PC-9 (cell line): ENCODE measurements at regions of chr5 and their contacts with region 1.

Region 1: DNA sequence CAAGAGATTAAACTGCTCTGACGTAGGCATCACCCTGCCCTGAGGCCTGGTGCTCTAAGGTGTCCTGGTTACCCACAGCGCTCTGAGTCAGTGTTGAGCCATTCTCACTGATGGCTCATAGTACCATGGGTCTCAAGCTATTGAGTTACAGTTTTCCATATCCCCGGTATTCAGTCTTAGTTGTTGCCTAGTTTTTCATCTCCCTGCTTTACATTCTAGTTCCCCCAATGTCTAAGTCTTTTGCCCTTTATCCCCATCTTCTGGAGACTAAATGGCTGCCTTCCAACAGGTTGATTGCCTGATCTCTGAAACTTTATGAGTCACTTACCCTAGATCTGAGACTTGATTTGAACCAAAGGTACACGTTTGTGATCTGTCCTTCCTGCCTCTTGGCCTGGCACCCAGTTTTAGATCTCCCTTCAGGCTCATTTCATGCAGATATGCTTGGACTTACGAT is 161.2 kb upstream of the PTGER4 start:
- DNase-seq: peak; percentile 96 to 98
- H3K4me3 ChIP-seq: no peak overlapping the region
- H3K27ac ChIP-seq: peak overlapping the region; percentile 84
- H3K4me1 ChIP-seq: peaks cover 33% of the 10 kb centered on the region
- H3K27me3 ChIP-seq: no peaks in the 10 kb centered on the region
- CTCF ChIP-seq: no peak

Region 2: DNA sequence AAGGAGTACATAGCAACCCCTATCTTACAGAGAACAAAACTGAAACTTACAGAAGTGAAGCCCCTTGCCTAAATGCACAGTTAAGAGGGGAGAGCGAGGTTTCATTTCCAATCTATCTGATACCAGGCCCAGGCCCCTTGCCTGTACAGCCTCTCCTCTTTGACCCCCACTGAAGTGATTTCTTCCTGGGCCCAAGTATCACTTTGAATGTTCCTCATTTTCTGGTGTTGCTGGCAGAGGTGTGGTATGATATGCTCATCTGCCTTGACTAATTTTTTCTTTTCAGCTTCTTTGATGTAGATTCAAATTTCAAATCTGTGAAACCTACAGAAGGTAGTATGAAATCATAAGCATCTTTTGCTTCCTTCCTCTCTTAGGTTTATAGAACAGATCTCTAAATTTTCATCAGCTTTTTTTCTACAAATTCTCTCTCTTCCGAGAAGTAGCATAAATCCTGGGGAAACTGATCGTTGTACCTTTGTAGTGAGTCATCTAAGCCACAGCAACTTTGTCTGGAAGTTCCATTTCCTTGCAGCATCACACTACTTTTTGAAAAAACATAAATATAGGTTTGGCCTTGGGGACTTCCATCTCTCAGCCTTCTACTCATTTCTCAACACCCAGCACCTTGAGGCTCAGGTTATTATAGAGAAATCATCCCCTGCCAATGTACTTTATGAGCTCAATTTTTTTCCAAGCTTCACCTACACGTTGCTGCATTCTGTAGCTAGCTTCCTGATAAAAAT is 241.2 kb before region 1 on chr5:
- CTCF ChIA-PET with region 1: no interaction called
- POLR2A ChIA-PET with region 1: no interaction called
- intact Hi-C with region 1: no loop called
- DNase-seq: no peak
- H3K4me3 ChIP-seq: no peak overlapping the region
- H3K27ac ChIP-seq: no peak overlapping the region
- H3K4me1 ChIP-seq: no peaks in the 10 kb centered on the region
- H3K27me3 ChIP-seq: no peaks in the 10 kb centered on the region
- CTCF ChIP-seq: no peak

Region 3: GRCh38 chr5:40404613-40405012 is 113.9 kb before region 1 on chr5:
- CTCF ChIA-PET with region 1: no interaction called
- POLR2A ChIA-PET with region 1: interaction called, 5 read pairs
- intact Hi-C with region 1: loop called (anchors 1 kb)
- DNase-seq: no peak
- H3K4me3 ChIP-seq: no peak overlapping the region
- H3K27ac ChIP-seq: 0 out of 2 replicates have a peak overlapping the region, but pooled peaks have one; percentile 8
- H3K4me1 ChIP-seq: peaks cover 40% of the 10 kb centered on the region
- H3K27me3 ChIP-seq: no peaks in the 10 kb centered on the region
- CTCF ChIP-seq: no peak

Region 4: GRCh38 chr5:40437452-40437861 is 81.1 kb before region 1 on chr5:
- CTCF ChIA-PET with region 1: no interaction called
- POLR2A ChIA-PET with region 1: interaction called, 10 read pairs
- intact Hi-C with region 1: loop called (anchors 1 kb)
- DNase-seq: peak; percentile 77 to 99
- H3K4me3 ChIP-seq: no peak overlapping the region
- H3K27ac ChIP-seq: peak overlapping the region; percentile 74
- H3K4me1 ChIP-seq: peaks cover 22% of the 10 kb centered on the region
- H3K27me3 ChIP-seq: no peaks in the 10 kb centered on the region
- CTCF ChIP-seq: no peak

Region 5: GRCh38 chr5:40551496-40552491 is 33.3 kb after region 1 on chr5:
- CTCF ChIA-PET with region 1: interaction called, 4 read pairs
- POLR2A ChIA-PET with region 1: no interaction called
- intact Hi-C with region 1: loop called (anchors 1 kb)
- DNase-seq: peak; percentile 81 to 98
- H3K4me3 ChIP-seq: peak overlapping the region; percentile 15; the same call in 1 of the 2 replicates
- H3K27ac ChIP-seq: peak overlapping the region; percentile 77
- H3K4me1 ChIP-seq: peaks cover 27% of the 10 kb centered on the region
- H3K27me3 ChIP-seq: no peaks in the 10 kb centered on the region
- CTCF ChIP-seq: no peak

Region 6: GRCh38 chr5:40587284-40587882 is 68.8 kb after region 1 on chr5:
- CTCF ChIA-PET with region 1: no interaction called
- POLR2A ChIA-PET with region 1: no interaction called
- intact Hi-C with region 1: loop called (anchors 2 kb)
- DNase-seq: peak; percentile 28 to 93
- H3K4me3 ChIP-seq: no peak overlapping the region
- H3K27ac ChIP-seq: peak overlapping the region; percentile 49
- H3K4me1 ChIP-seq: peaks cover 19% of the 10 kb centered on the region
- H3K27me3 ChIP-seq: no peaks in the 10 kb centered on the region
- CTCF ChIP-seq: no peak